B cell (primary cell): ENCODE measurements at regions of chr4 and their contacts with region 1.

Region 1: DNA sequence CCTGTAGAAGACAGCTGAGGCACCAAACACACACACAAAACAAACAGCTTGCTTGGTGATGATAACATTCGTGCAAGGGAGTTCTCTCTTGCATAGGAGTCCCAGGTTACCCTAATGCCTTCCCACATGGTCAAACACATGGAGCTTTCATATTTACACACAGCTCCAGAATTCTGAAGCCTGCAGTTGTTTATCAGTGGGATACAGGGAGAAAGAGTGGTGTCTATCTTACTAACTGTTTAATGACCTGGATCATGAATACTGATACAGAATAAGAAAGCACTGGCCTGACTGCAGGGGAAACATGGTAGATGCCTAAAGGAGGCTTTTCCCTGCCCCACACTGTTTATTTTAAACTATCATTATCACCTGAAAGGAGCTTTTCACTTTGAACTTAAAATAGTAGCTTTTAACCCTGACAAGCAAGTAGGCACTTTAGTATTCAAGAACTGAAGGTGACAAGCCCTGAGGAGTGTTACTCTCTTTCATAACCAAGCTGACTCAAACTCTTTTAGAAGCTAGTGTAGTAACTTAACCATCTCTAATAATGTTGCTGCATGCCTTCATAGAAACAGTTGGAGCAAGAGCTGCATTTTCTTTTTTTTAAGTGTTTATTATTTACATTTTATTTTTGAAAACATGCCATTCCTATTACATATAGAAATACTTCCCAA is 15.6 kb downstream of the TET2 start:
- DNase-seq: no peak
- ATAC-seq: no peak
- H3K4me3 ChIP-seq: no peak overlapping the region
- H3K4me3 Mint-ChIP-seq: no peak overlapping the region
- H3K27ac ChIP-seq: no peak overlapping the region
- H3K27ac Mint-ChIP-seq: no peak overlapping the region
- H3K4me1 ChIP-seq: peaks cover 0 to 7% of the 10 kb centered on the region in 2 donors
- H3K4me1 Mint-ChIP-seq: peaks cover 33% of the 10 kb centered on the region
- H3K27me3 ChIP-seq: no peaks in the 10 kb centered on the region
- H3K27me3 Mint-ChIP-seq: no peaks in the 10 kb centered on the region
- CTCF ChIP-seq: no peak

Region 2: GRCh38 chr4:105196523-105197145 is 34.4 kb after region 1 on chr4:
- CTCF ChIA-PET with region 1: no interaction called
- POLR2A ChIA-PET with region 1: no interaction called
- intact Hi-C with region 1: loop called (anchors 5 kb)
- DNase-seq: peak; percentile 56
- ATAC-seq: peak; percentile 68
- H3K4me3 ChIP-seq: peak overlapping the region in 3 of 5 experiments; percentile 12 to 21 (median 13)
- H3K4me3 Mint-ChIP-seq: peak overlapping the region; percentile 70
- H3K27ac ChIP-seq: peak overlapping the region in 1 of 2 donors; percentile 74
- H3K27ac Mint-ChIP-seq: peak overlapping the region; percentile 38
- H3K4me1 ChIP-seq: peaks cover 17 to 23% of the 10 kb centered on the region in 2 donors
- H3K4me1 Mint-ChIP-seq: peaks cover 48% of the 10 kb centered on the region
- H3K27me3 ChIP-seq: no peaks in the 10 kb centered on the region
- H3K27me3 Mint-ChIP-seq: no peaks in the 10 kb centered on the region
- CTCF ChIP-seq: peak; percentile 34